Activated naive CD4-positive, alpha-beta T cell treated with anti-CD3 and anti-CD28 coated beads, Interleukin-2, amount 10 ng/mL, durations not matched to agents 7 days and 5 days (primary cell): ENCODE measurements at regions of chr1 and their contacts with region 1.

Region 1: GRCh38 chr1:154558575-154559465 is at the start of gene UBE2Q1:
- DNase-seq: peak; percentile 100
- H3K4me3 Mint-ChIP-seq: peak within 1 kb of the TSS; percentile 91
- H3K27ac Mint-ChIP-seq: peak within 1 kb of the TSS; percentile 87
- H3K4me1 Mint-ChIP-seq: peaks cover 36% of the 10 kb centered on the region
- H3K27me3 Mint-ChIP-seq: peaks cover 8% of the 10 kb centered on the region

Region 2: GRCh38 chr1:154520333-154520732 is 38.5 kb before region 1 on chr1:
- CTCF ChIA-PET with region 1: no interaction called
- DNase-seq: no peak
- H3K4me3 Mint-ChIP-seq: no peak overlapping the region
- H3K27ac Mint-ChIP-seq: no peak overlapping the region
- H3K4me1 Mint-ChIP-seq: no peaks in the 10 kb centered on the region
- H3K27me3 Mint-ChIP-seq: peaks cover 59% of the 10 kb centered on the region

Region 3: DNA sequence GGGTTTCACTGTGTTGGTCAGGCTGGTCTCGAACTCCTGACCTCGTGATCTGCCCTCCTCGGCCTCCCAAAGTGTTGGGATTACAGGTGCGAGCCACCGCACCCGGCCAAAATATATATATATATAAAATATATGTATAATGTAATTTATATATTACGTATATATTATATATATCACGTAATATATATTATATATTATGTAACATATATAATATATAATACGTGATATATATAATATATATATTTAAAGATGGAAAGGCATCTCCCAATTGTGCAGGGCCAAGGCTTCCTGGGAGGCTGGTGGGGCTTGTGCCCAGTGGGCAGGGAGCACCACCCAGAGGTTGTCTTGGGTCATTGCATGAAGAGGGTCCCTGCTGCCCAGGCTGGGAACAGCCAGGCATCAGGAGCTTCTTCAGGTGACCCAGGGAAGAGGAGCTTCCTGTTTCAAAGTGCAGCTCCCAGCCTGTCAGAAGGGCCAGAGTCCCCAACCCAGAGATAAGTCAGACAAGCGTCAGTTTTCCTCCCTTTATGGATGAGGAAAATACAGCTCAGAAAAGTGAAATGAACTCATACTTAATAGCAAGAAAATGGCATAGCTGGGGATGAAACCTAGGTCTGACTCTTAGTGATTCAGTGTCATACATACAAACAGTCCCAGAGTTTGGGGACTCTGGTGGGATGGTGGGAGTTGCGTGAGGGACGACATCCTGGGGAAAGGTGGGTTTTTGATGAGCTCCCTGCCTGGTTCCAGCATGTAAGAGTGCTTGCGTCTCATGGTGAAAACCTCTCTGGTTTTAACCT is 12.4 kb before region 1 on chr1:
- CTCF ChIA-PET with region 1: interaction called, 15 read pairs
- DNase-seq: peak; percentile 73
- H3K4me3 Mint-ChIP-seq: no peak overlapping the region
- H3K27ac Mint-ChIP-seq: no peak overlapping the region
- H3K4me1 Mint-ChIP-seq: peaks cover 15% of the 10 kb centered on the region
- H3K27me3 Mint-ChIP-seq: peaks cover 19% of the 10 kb centered on the region

Region 4: DNA sequence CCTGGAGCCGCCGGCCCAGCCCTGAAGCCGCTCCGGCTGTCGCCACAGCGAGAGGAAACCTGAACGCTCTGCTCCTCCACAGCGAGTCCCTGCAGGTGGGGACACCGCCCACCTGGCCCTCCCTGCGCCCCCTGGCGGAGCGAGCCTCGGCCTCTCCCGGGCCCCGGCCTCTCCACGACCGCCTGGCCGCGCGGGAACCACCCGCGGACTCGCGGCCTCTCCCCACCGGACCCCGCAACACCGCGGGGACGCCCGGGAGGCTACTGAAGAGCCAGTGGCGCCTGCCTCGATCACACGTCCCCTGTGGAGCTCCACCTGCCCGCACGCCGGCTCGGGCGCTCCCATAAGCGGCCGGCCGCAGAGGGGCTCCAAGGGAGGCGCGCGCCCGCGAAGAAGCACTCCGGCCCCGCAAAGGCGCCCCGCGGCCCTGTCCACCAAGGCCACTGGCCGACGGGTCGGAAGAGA is 201.7 kb after region 1 on chr1:
- CTCF ChIA-PET with region 1: interaction called, 11 read pairs
- DNase-seq: peak; percentile 89
- H3K4me3 Mint-ChIP-seq: peak overlapping the region; percentile 49
- H3K27ac Mint-ChIP-seq: peak overlapping the region; percentile 90
- H3K4me1 Mint-ChIP-seq: peaks cover 48% of the 10 kb centered on the region
- H3K27me3 Mint-ChIP-seq: peaks cover 12% of the 10 kb centered on the region

Region 5: DNA sequence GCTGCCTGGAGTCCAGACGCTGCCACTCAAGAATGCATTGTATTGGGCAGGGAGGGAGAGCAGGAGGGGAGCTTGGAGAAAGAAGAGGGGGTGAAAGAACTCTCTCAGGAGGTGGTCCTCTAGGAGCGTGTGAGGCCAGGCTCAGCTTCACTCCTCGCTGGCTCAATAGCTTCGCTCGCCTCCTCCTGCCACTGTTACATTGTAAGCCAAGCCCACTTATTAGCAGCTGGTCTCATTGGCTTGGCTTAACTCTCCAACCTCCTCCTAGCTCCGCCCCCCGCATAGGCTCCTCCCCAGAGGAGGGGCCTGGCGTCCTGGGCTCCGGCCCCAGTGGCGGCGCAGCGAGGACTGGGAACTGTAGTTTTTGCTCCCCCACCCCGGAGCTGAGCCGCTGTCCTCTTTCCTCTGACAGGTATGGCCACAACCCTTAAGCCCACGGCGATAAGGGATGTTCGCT is 311.3 kb after region 1 on chr1 and contains the start of gene KCNN3:
- CTCF ChIA-PET with region 1: interaction called, 14 read pairs
- DNase-seq: peak; percentile 83
- H3K4me3 Mint-ChIP-seq: no peak within 1 kb of the TSS
- H3K27ac Mint-ChIP-seq: no peak within 1 kb of the TSS
- H3K4me1 Mint-ChIP-seq: peaks cover 16% of the 10 kb centered on the region
- H3K27me3 Mint-ChIP-seq: peaks cover 66% of the 10 kb centered on the region

Region 6: GRCh38 chr1:154878371-154879022 is 319.7 kb after region 1 on chr1:
- CTCF ChIA-PET with region 1: interaction called, 14 read pairs
- DNase-seq: peak; percentile 79
- H3K4me3 Mint-ChIP-seq: no peak overlapping the region
- H3K27ac Mint-ChIP-seq: no peak overlapping the region
- H3K4me1 Mint-ChIP-seq: no peaks in the 10 kb centered on the region
- H3K27me3 Mint-ChIP-seq: peaks cover 18% of the 10 kb centered on the region

Region 7: GRCh38 chr1:154936555-154937084 is 377.8 kb after region 1 on chr1 and contains the start of gene PMVK:
- CTCF ChIA-PET with region 1: interaction called, 10 read pairs
- DNase-seq: peak; percentile 97
- H3K4me3 Mint-ChIP-seq: peak within 1 kb of the TSS; percentile 91
- H3K27ac Mint-ChIP-seq: peak within 1 kb of the TSS; percentile 97
- H3K4me1 Mint-ChIP-seq: peaks cover 61% of the 10 kb centered on the region
- H3K27me3 Mint-ChIP-seq: no peaks in the 10 kb centered on the region

Region 8: GRCh38 chr1:155063550-155064110 is 504.8 kb after region 1 on chr1 and contains the start of gene EFNA4:
- CTCF ChIA-PET with region 1: interaction called, 12 read pairs
- DNase-seq: peak; percentile 93
- H3K4me3 Mint-ChIP-seq: peak within 1 kb of the TSS; percentile 76
- H3K27ac Mint-ChIP-seq: peak within 1 kb of the TSS; percentile 61
- H3K4me1 Mint-ChIP-seq: peaks cover 36% of the 10 kb centered on the region
- H3K27me3 Mint-ChIP-seq: no peaks in the 10 kb centered on the region